Naive thymus-derived CD4-positive, alpha-beta T cell (primary cell): ENCODE measurements at regions of chr10 and their contacts with region 1.

Region 1: DNA sequence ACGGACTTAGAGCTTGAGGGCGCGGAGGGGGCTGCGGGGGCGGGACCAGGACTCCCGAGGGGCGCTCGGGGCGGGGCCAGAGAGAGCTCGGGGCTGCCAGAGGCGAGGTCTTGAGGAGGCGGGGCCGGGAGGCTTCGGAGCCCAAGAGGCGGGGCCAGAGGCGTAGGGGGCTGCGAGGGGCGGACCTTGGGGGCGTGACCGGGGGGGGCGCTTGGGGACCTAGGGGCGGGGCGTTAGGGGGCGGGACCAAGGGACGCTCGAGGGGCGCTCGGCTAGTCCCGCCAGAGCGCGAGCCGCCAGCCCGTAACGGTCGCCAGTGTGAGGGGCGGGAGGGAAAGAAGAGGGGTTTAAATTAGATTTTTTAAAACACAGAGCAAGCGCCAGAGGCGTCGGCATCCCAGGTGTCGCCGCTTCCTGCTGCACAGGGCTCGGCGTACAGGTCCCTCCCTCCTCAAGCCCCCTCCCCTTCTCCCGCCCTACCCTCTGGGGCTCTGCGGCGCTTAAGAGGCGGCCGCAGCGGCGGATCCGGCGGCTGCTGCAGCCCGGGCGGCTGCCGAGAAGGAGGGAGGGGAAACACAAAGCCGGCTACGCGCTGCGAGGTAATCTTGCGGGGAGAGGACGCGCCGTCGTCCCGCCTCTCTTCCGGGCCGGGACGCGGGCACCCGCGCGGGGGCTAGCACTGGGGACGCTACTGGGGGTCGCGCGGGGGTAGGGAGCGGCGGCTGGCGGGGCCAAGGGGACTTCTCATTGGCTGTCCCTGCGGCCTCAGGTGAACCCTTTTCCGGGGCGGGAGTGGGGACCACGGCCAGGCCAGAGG is at the start of gene ADD3:
- DNase-seq: peak; percentile 82 to 93 (median 90)
- ATAC-seq: peak; percentile 86
- H3K4me3 ChIP-seq: peak within 1 kb of the TSS; percentile 66
- H3K4me3 Mint-ChIP-seq: peak within 1 kb of the TSS in 2 of 10 donors; percentile 99 to 100
- H3K27ac ChIP-seq: peak within 1 kb of the TSS; percentile 88
- H3K27ac Mint-ChIP-seq: peak within 1 kb of the TSS in 7 of 9 donors; percentile 91 to 98 (median 94)
- H3K4me1 ChIP-seq: peaks cover 33 to 36% of the 10 kb centered on the region in 2 donors
- H3K4me1 Mint-ChIP-seq: peaks cover 28 to 54% (median 44%) of the 10 kb centered on the region in 7 donors
- H3K27me3 ChIP-seq: no peaks in the 10 kb centered on the region
- H3K27me3 Mint-ChIP-seq: peaks cover 0 to 6% (median 0%) of the 10 kb centered on the region in 5 donors
- total RNA-seq, gene ADD3: 281 to 463 (median 342) TPM

Region 2: GRCh38 chr10:109922976-109923921 is 84.7 kb before region 1 on chr10 and contains the start of gene XPNPEP1:
- CTCF ChIA-PET with region 1: interaction called, 7 read pairs
- POLR2A ChIA-PET with region 1: interaction called, 3 read pairs
- intact Hi-C with region 1: loop called (anchors 1 kb)
- DNase-seq: peak; percentile 55 to 90 (median 66)
- ATAC-seq: peak; percentile 98
- H3K4me3 ChIP-seq: peak within 1 kb of the TSS; percentile 67
- H3K4me3 Mint-ChIP-seq: peak within 1 kb of the TSS; percentile 78 to 94 (median 90)
- H3K27ac ChIP-seq: peak within 1 kb of the TSS; percentile 83
- H3K27ac Mint-ChIP-seq: peak within 1 kb of the TSS; percentile 75 to 95 (median 89)
- H3K4me1 ChIP-seq: peaks cover 30 to 39% of the 10 kb centered on the region in 2 donors
- H3K4me1 Mint-ChIP-seq: peaks cover 36 to 58% (median 54%) of the 10 kb centered on the region in 7 donors
- H3K27me3 ChIP-seq: no peaks in the 10 kb centered on the region
- H3K27me3 Mint-ChIP-seq: peaks cover 0 to 16% (median 0%) of the 10 kb centered on the region in 5 donors
- total RNA-seq, gene XPNPEP1: 44.1 to 100 (median 60.7) TPM

Region 3: DNA sequence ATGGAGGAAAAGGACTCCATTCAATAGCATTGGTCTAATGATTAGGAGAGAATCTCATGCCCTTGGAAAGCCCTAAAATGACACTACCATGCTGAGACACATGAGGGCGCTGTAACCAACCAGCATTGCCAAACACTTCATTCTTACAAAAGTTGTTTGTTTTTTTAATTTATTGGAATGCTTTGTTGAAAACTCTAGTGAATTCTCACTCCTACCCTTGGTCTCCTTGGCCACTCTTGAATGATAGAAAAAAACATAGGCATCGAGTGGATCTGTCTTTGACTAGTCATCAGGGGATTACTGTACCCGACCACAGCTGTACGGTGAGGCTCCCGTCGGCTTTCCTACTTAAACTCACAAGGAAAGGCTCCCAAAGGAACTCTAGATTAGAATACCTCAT is 29.4 kb before region 1 on chr10:
- CTCF ChIA-PET with region 1: interaction called, 4 read pairs
- POLR2A ChIA-PET with region 1: interaction called, 7 read pairs
- intact Hi-C with region 1: loop called in 1 of 2 experiments (anchors 1 kb)
- DNase-seq: peak; percentile 30 to 68 (median 51)
- ATAC-seq: peak; percentile 87
- H3K4me3 ChIP-seq: no peak overlapping the region
- H3K4me3 Mint-ChIP-seq: no peak overlapping the region
- H3K27ac ChIP-seq: no peak overlapping the region
- H3K27ac Mint-ChIP-seq: peak overlapping the region in 3 of 9 donors; percentile 25 to 44 (median 41)
- H3K4me1 ChIP-seq: no peaks in the 10 kb centered on the region
- H3K4me1 Mint-ChIP-seq: peaks cover 5 to 38% (median 19%) of the 10 kb centered on the region in 7 donors
- H3K27me3 ChIP-seq: no peaks in the 10 kb centered on the region
- H3K27me3 Mint-ChIP-seq: peaks cover 0 to 12% (median 0%) of the 10 kb centered on the region in 5 donors

Region 4: DNA sequence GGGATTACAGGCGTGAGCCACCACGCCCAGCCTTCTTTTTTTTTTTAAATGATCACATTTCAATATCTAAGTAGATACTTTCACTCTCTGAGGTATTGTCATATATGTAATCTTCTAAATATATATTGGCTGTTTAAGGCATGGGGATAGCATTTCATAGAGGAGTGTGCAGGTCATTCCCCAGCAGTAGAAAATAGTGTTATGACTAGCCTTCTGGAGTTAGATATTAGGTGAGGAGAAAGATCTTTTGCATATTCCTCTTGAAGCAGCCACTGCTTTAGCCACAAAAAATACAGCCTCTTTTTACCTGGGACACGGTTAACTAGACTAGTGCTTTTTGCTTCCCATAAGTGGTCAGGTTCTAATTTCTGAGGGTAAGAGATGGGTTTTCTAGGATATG is 28.7 kb after region 1 on chr10:
- CTCF ChIA-PET with region 1: interaction called, 3 read pairs
- POLR2A ChIA-PET with region 1: interaction called, 5 read pairs
- intact Hi-C with region 1: loop called in 1 of 2 experiments (anchors 2 kb)
- DNase-seq: no peak
- ATAC-seq: no peak
- H3K4me3 ChIP-seq: no peak overlapping the region
- H3K4me3 Mint-ChIP-seq: peak overlapping the region in 6 of 10 donors; percentile 6 to 66 (median 30)
- H3K27ac ChIP-seq: no peak overlapping the region
- H3K27ac Mint-ChIP-seq: peak overlapping the region in 7 of 9 donors; percentile 42 to 91 (median 69)
- H3K4me1 ChIP-seq: peaks cover 25 to 69% of the 10 kb centered on the region in 2 donors
- H3K4me1 Mint-ChIP-seq: peaks cover 61 to 98% (median 92%) of the 10 kb centered on the region in 7 donors
- H3K27me3 ChIP-seq: no peaks in the 10 kb centered on the region
- H3K27me3 Mint-ChIP-seq: no peaks in the 10 kb centered on the region

Region 5: DNA sequence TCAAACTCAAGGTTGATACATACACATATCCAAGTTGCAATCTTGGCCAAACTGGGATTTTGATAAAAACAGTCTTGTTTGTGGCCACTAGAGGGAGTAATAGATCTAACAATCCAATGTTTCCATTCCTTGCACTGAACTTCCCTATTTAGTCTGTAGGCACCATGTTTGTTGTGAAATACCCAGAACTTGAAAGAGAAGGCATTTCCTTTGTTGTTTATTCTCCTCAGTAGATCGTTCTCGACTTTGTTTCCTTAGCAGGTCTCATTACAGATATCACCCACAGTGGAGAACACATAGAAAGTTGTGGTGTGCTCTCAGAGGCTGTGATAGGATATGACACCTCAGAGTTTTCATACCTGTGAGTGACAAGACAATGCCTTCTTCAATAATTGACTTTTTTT is 129.2 kb after region 1 on chr10:
- CTCF ChIA-PET with region 1: no interaction called
- POLR2A ChIA-PET with region 1: interaction called, 4 read pairs
- intact Hi-C with region 1: loop called in 1 of 2 experiments (anchors 1 kb)
- DNase-seq: peak in 7 of 9 donors; percentile 48 to 67 (median 64)
- ATAC-seq: peak; percentile 85
- H3K4me3 ChIP-seq: no peak overlapping the region
- H3K4me3 Mint-ChIP-seq: peak overlapping the region in 1 of 10 donors; percentile 19
- H3K27ac ChIP-seq: peak overlapping the region; percentile 4
- H3K27ac Mint-ChIP-seq: peak overlapping the region; percentile 2 to 83 (median 45)
- H3K4me1 ChIP-seq: peaks cover 14% of the 10 kb centered on the region in 2 donors
- H3K4me1 Mint-ChIP-seq: peaks cover 13 to 38% (median 29%) of the 10 kb centered on the region in 7 donors
- H3K27me3 ChIP-seq: no peaks in the 10 kb centered on the region
- H3K27me3 Mint-ChIP-seq: no peaks in the 10 kb centered on the region

Region 6: GRCh38 chr10:110567201-110568054 is 559.5 kb after region 1 on chr10 and contains the start of gene SMC3:
- CTCF ChIA-PET with region 1: no interaction called
- POLR2A ChIA-PET with region 1: no interaction called
- intact Hi-C with region 1: loop called (anchors 2 kb)
- DNase-seq: peak; percentile 82 to 96 (median 94)
- ATAC-seq: peak; percentile 94
- H3K4me3 ChIP-seq: peak within 1 kb of the TSS; percentile 88
- H3K4me3 Mint-ChIP-seq: peak within 1 kb of the TSS; percentile 91 to 99 (median 96)
- H3K27ac ChIP-seq: peak within 1 kb of the TSS; percentile 88
- H3K27ac Mint-ChIP-seq: peak within 1 kb of the TSS; percentile 96 to 99 (median 97)
- H3K4me1 ChIP-seq: peaks cover 20 to 21% of the 10 kb centered on the region in 2 donors
- H3K4me1 Mint-ChIP-seq: peaks cover 21 to 45% (median 38%) of the 10 kb centered on the region in 7 donors
- H3K27me3 ChIP-seq: no peaks in the 10 kb centered on the region
- H3K27me3 Mint-ChIP-seq: peaks cover 6 to 26% (median 14%) of the 10 kb centered on the region in 5 donors
- total RNA-seq, gene SMC3: 29.8 to 69.8 (median 48.5) TPM